ENCODE measurements at regions of chr3 and their contacts with region 1.

Region 1: GRCh38 chr3:10548992-10549391 is 43.6 kb upstream of the ATP2B2 start:
- DNase-seq: peak in 1 of 2 donors; percentile 3
- H3K4me3 ChIP-seq: no peak overlapping the region
- H3K27ac ChIP-seq: no peak overlapping the region
- H3K4me1 ChIP-seq: no peaks in the 10 kb centered on the region
- H3K27me3 ChIP-seq: no peaks in the 10 kb centered on the region
- CTCF ChIP-seq: no peak
- POLR2A ChIP-seq: no peak

Region 2: DNA sequence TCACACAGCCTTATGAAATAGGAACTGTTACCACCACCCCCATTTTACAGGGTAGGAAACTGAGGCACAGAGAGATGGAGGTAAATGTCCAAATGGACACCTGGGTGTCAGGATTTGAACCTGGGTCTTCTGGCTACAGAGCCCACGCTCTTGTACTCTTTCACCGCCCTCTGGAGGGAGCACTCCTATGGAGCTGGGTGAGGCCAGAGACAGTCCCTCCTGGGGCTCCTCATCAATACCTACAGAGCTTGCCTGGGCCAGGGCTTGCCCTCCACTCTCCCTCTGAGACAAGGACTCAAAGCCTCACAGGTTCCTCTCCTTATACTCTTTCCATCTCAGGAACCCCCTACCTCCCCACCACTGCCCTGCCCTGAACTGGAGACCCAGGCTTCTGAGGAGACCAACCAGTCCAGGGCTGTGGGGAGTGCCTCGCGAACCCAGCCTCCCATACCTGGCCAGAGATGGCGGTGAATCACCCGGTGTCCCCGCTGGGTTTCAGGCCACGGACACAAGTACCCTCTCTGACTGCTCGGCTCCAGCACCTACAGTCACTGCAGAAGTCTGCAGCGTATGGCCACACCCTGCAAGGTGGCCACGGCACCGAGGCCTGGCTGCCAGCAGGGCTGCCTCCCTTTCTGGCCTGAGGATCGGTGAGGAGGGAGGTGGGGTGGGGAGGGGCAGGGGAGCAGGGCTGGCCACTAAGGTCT is 21.5 kb before region 1 on chr3:
- intact Hi-C with region 1: loop called (anchors 1 kb)
- DNase-seq: peak in 1 of 2 donors; percentile 30
- H3K4me3 ChIP-seq: no peak overlapping the region
- H3K27ac ChIP-seq: no peak overlapping the region
- H3K4me1 ChIP-seq: no peaks in the 10 kb centered on the region
- H3K27me3 ChIP-seq: peaks cover 0 to 5% of the 10 kb centered on the region in 2 donors
- CTCF ChIP-seq: no peak
- POLR2A ChIP-seq: no peak